ENCODE measurements at regions of chrX and their contacts with region 1.

Region 1: DNA sequence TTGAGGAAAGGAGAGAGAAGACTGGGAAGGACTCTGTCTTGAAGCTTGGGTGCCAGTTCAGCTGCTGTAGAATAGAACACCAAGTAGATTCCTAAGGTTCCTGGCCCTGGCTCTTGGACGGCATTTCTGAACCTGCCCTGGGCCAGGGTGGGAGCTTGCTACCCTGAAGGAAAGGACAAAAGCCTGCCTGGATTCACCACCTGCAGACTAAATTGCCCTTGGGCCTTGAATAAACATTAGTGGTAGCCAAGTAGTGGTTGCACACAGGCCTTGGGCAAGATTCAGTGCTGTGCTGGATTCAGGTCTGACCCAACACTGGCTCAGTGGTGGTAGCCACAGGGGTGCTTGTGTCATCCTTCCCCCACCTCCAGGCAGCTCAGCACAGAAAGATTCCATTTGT is 588.4 kb upstream of the AMOT start:
- DNase-seq: no peak
- ATAC-seq: no peak
- H3K4me3 ChIP-seq: peak overlapping the region in 1 of 10 donors; percentile 3
- H3K27ac ChIP-seq: no peak overlapping the region
- H3K4me1 ChIP-seq: no peaks in the 10 kb centered on the region
- H3K27me3 ChIP-seq: no peaks in the 10 kb centered on the region
- CTCF ChIP-seq: no peak

Region 2: GRCh38 chrX:113492895-113493294 is 63.9 kb after region 1 on chrX:
- intact Hi-C with region 1: no loop called
- DNase-seq: no peak
- ATAC-seq: no peak
- H3K4me3 ChIP-seq: no peak overlapping the region
- H3K27ac ChIP-seq: no peak overlapping the region
- H3K4me1 ChIP-seq: no peaks in the 10 kb centered on the region
- H3K27me3 ChIP-seq: no peaks in the 10 kb centered on the region
- CTCF ChIP-seq: no peak

Region 3: DNA sequence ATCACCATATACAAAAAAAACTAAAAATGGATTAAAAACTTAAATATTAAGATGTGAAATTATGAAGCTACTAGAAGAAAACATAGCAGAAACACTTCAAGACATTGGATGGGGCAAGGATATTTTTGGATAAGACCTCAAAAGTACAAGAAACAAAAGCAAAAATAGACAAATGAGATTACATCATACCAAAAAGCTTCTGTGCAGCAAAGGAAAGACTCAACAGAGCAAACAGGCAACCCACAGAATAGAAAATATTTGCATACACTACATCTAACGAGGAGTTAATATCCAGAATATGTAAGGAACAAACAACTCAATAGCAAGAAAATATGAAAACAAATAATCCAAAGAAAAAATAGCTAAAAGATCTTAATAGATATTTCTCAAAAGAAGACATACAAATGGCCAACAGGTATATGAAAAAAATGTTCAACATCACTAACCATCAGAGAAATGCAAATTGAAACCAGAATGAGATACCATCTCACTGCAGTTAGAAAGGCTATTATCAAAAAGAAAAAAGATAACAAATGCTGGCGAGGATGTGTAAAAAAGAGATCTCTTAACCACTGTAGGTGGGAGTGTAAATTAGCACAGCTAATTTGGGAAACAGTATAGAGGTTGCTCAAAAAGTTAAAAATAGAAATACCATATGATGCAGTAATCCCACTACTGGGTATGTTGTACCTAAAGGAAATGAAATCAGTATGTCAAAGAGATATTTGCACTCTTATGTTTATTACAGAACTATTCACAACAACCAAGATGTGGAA is 1822.6 kb after region 1 on chrX:
- intact Hi-C with region 1: loop called in 1 of 10 experiments (anchors 5 kb)
- DNase-seq: no peak
- ATAC-seq: no peak
- H3K4me3 ChIP-seq: no peak overlapping the region
- H3K27ac ChIP-seq: no peak overlapping the region
- H3K4me1 ChIP-seq: no peaks in the 10 kb centered on the region
- H3K27me3 ChIP-seq: peaks cover 0 to 53% (median 0%) of the 10 kb centered on the region in 7 donors
- CTCF ChIP-seq: no peak